Dorsolateral prefrontal cortex (tissue), 120 donors: ENCODE measurements at regions of chr5 and their contacts with region 1.

Region 1: GRCh38 chr5:59380350-59380951 is 513.1 kb downstream of the PDE4D start:
- DNase-seq: no peak
- H3K4me3 ChIP-seq: peak overlapping the region in 1 of 59 donors; percentile 27
- H3K27ac ChIP-seq: peak overlapping the region in 5 of 59 donors; percentile 0 to 68 (median 10)
- H3K27me3 ChIP-seq: no peaks in the 10 kb centered on the region
- CTCF ChIP-seq: peak in 55 of 56 donors; percentile 46 to 83 (median 72)

Region 2: GRCh38 chr5:59188419-59189225 is 191.8 kb before region 1 on chr5:
- intact Hi-C with region 1: loop called in 1 of 2 experiments (anchors 5 kb)
- DNase-seq: peak; percentile 40 to 75 (median 68)
- H3K4me3 ChIP-seq: peak overlapping the region in 57 of 59 donors; percentile 0 to 64 (median 39)
- H3K27ac ChIP-seq: peak overlapping the region in 24 of 59 donors; percentile 0 to 70 (median 44)
- H3K27me3 ChIP-seq: no peaks in the 10 kb centered on the region
- CTCF ChIP-seq: peak; percentile 74 to 99 (median 92)

Region 3: GRCh38 chr5:59206132-59206581 is 174.3 kb before region 1 on chr5:
- intact Hi-C with region 1: no loop called
- DNase-seq: no peak
- H3K4me3 ChIP-seq: no peak overlapping the region
- H3K27ac ChIP-seq: peak overlapping the region in 42 of 59 donors; percentile 6 to 85 (median 50)
- H3K27me3 ChIP-seq: no peaks in the 10 kb centered on the region
- CTCF ChIP-seq: no peak